Caco-2 (cell line): ENCODE measurements at regions of chr1 and their contacts with region 1.

Region 1: GRCh38 chr1:234722904-234723720 is 113.1 kb upstream of the IRF2BP2 start:
- DNase-seq: no peak
- H3K4me3 ChIP-seq: no peak overlapping the region
- H3K4me3 Mint-ChIP-seq: peak overlapping the region; percentile 64
- H3K27ac Mint-ChIP-seq: peak overlapping the region; percentile 86
- H3K4me1 ChIP-seq: peaks cover 93% of the 10 kb centered on the region
- H3K4me1 Mint-ChIP-seq: peaks cover 69% of the 10 kb centered on the region
- H3K27me3 ChIP-seq: no peaks in the 10 kb centered on the region
- H3K27me3 Mint-ChIP-seq: no peaks in the 10 kb centered on the region
- CTCF ChIP-seq: no peak

Region 2: DNA sequence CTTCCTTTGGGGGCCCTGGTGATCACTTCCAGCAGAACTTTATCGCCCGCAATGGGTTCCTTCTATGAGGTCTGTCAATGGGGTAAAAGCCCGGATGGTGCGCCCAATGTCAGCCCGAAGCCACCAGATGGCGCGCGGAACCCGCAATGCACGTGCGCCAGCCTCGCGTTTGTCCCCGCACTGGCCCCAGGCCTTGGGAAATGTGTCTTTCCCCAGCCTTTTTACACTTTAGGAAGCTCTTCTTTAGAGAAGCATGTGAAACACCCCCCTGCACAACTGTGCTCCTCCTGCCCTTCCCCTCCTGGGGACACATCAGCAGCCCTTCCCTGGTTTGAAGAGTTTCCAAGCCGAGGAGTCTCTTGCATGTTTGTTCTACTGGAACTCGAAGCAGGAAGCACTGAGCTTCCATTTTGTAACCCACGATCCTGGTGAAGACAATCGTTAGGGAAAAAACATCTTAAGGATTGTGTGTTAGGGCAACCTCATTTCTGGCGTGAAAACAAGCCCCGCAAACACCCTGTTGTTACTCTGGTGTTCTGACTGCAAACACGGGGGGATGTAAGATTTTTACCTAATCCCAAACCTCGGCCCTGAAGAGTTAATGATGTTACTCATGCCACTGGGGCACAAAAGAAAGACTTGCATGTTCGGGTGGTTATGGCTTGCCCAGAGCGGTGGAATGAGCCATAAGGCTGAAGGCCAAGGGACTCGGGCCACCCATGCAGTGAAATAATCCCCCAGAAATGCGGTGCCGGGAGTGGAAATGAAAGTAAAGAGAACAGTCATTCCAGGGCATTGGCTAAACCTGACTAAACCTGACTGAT is 223.8 kb before region 1 on chr1:
- CTCF ChIA-PET with region 1: interaction called, 4 read pairs
- POLR2A ChIA-PET with region 1: interaction called, 4 read pairs
- intact Hi-C with region 1: loop called (anchors 2 kb)
- DNase-seq: peak; percentile 81 to 91
- H3K4me3 ChIP-seq: no peak overlapping the region
- H3K4me3 Mint-ChIP-seq: no peak overlapping the region
- H3K27ac Mint-ChIP-seq: peak overlapping the region; percentile 96
- H3K4me1 ChIP-seq: peaks cover 11% of the 10 kb centered on the region
- H3K4me1 Mint-ChIP-seq: peaks cover 18% of the 10 kb centered on the region
- H3K27me3 ChIP-seq: no peaks in the 10 kb centered on the region
- H3K27me3 Mint-ChIP-seq: no peaks in the 10 kb centered on the region
- CTCF ChIP-seq: peak; percentile 96

Region 3: GRCh38 chr1:234638832-234639799 is 84.0 kb before region 1 on chr1:
- CTCF ChIA-PET with region 1: no interaction called
- POLR2A ChIA-PET with region 1: interaction called, 4 read pairs
- intact Hi-C with region 1: loop called (anchors 1 kb)
- DNase-seq: peak; percentile 90 to 93
- H3K4me3 ChIP-seq: no peak overlapping the region
- H3K4me3 Mint-ChIP-seq: peak overlapping the region; percentile 59
- H3K27ac Mint-ChIP-seq: peak overlapping the region; percentile 82
- H3K4me1 ChIP-seq: peaks cover 57% of the 10 kb centered on the region
- H3K4me1 Mint-ChIP-seq: peaks cover 42% of the 10 kb centered on the region
- H3K27me3 ChIP-seq: no peaks in the 10 kb centered on the region
- H3K27me3 Mint-ChIP-seq: no peaks in the 10 kb centered on the region
- CTCF ChIP-seq: no peak

Region 4: DNA sequence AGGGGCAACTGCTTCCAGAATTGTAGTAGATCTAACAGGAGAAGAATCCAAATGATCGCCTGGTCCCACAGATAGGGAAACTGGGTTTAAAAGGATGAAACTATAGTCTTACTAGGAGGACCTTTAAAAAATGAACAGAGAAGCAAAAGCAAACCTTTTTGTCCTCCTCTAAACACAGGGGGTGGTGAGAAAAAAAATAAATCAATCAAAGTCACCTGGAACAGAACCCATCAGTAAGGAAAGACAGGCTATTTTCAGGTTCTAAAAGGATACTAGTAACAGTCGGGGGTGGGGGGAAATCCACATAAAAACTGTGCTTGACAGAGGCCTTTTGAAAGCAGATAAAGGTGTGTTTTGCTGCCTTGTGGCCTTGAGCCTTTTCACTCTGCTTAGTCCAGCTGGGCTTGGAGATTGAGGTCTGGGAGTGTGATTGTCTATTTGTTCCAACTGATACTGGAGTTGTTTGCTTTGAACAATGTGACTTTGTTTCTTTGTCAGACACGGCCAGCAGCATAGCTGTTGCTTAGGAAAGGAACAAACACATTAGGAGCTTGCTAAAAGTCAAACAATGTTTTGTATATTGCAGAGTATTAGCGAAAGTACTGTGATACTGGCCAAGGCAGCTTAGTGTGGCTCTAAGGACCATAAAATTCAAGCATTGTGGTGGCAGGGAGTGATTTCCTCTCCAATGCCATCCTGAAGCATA is 28.0 kb after region 1 on chr1:
- CTCF ChIA-PET with region 1: no interaction called
- POLR2A ChIA-PET with region 1: no interaction called
- intact Hi-C with region 1: loop called (anchors 1 kb)
- DNase-seq: no peak
- H3K4me3 ChIP-seq: no peak overlapping the region
- H3K4me3 Mint-ChIP-seq: no peak overlapping the region
- H3K27ac Mint-ChIP-seq: no peak overlapping the region
- H3K4me1 ChIP-seq: peaks cover 23% of the 10 kb centered on the region
- H3K4me1 Mint-ChIP-seq: peaks cover 33% of the 10 kb centered on the region
- H3K27me3 ChIP-seq: no peaks in the 10 kb centered on the region
- H3K27me3 Mint-ChIP-seq: no peaks in the 10 kb centered on the region
- CTCF ChIP-seq: no peak

Region 5: DNA sequence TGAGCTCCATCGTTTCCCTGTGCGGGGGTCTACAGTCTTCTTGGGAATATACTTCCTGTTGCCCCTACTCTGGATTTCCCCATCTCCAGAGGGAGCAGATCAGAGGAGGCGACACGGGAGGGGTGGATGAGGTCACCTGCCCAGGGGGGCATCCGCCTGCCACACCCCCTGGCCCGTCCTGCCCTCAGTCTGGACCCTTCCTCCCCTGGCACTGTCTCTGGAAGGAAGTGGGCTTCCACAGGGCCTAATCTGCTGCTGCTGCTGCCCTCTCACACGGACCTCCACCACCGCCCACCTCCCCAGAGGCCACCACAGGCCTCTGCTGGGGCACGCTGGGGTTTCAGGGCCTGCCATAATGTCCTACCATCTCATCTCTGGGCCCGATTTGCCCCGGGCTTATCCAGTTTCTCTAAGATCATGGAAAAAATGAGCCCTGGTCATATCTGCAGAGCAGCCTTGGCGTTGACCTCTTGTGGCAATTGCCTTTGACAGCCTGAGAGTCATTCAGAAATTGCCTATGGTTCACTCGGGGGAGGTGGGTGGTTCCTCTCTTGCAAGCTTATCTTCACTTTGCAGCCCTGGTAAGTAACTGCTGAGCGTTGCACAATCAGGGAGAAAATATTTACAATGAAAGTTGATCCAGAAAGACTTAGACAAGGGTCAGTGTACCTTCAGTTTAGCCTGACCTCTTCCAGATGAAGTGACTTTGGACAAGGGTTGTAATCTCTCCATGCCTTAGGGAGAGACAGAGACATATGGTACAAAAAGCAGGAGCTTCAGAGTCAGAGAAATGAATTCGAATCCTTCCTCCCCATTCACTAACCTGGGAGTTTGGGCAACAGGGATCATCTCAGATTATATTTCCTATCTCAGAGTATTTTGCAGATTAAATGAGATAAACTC is 153.1 kb after region 1 on chr1:
- CTCF ChIA-PET with region 1: no interaction called
- POLR2A ChIA-PET with region 1: no interaction called
- intact Hi-C with region 1: loop called (anchors 5 kb)
- DNase-seq: peak; percentile 84 to 87
- H3K4me3 ChIP-seq: no peak overlapping the region
- H3K4me3 Mint-ChIP-seq: no peak overlapping the region
- H3K27ac Mint-ChIP-seq: peak overlapping the region; percentile 58
- H3K4me1 ChIP-seq: peaks cover 44% of the 10 kb centered on the region
- H3K4me1 Mint-ChIP-seq: peaks cover 35% of the 10 kb centered on the region
- H3K27me3 ChIP-seq: no peaks in the 10 kb centered on the region
- H3K27me3 Mint-ChIP-seq: no peaks in the 10 kb centered on the region
- CTCF ChIP-seq: no peak

Region 6: GRCh38 chr1:234978397-234979295 is 255.5 kb after region 1 on chr1:
- CTCF ChIA-PET with region 1: interaction called, 3 read pairs
- POLR2A ChIA-PET with region 1: interaction called, 9 read pairs
- intact Hi-C with region 1: loop called (anchors 5 kb)
- DNase-seq: peak; percentile 71 to 74
- H3K4me3 ChIP-seq: no peak overlapping the region
- H3K4me3 Mint-ChIP-seq: no peak overlapping the region
- H3K27ac Mint-ChIP-seq: peak overlapping the region; percentile 94
- H3K4me1 ChIP-seq: peaks cover 74% of the 10 kb centered on the region
- H3K4me1 Mint-ChIP-seq: peaks cover 66% of the 10 kb centered on the region
- H3K27me3 ChIP-seq: no peaks in the 10 kb centered on the region
- H3K27me3 Mint-ChIP-seq: no peaks in the 10 kb centered on the region
- CTCF ChIP-seq: peak; percentile 9 to 20